Activated naive CD4-positive, alpha-beta T cell treated with anti-CD3 and anti-CD28 coated beads, Interleukin-2, amount 10 ng/mL, durations not matched to agents 7 days and 5 days (primary cell): ENCODE measurements at regions of chr4 and their contacts with region 1.

Region 1: GRCh38 chr4:168923526-168924194 is 86.4 kb downstream of the CBR4 start:
- DNase-seq: peak; percentile 68
- H3K4me3 Mint-ChIP-seq: no peak overlapping the region
- H3K27ac Mint-ChIP-seq: no peak overlapping the region
- H3K4me1 Mint-ChIP-seq: no peaks in the 10 kb centered on the region
- H3K27me3 Mint-ChIP-seq: no peaks in the 10 kb centered on the region

Region 2: GRCh38 chr4:168514249-168514852 is 409.3 kb before region 1 on chr4:
- CTCF ChIA-PET with region 1: interaction called, 23 read pairs
- DNase-seq: no peak
- H3K4me3 Mint-ChIP-seq: no peak overlapping the region
- H3K27ac Mint-ChIP-seq: no peak overlapping the region
- H3K4me1 Mint-ChIP-seq: peaks cover 40% of the 10 kb centered on the region
- H3K27me3 Mint-ChIP-seq: peaks cover 13% of the 10 kb centered on the region

Region 3: DNA sequence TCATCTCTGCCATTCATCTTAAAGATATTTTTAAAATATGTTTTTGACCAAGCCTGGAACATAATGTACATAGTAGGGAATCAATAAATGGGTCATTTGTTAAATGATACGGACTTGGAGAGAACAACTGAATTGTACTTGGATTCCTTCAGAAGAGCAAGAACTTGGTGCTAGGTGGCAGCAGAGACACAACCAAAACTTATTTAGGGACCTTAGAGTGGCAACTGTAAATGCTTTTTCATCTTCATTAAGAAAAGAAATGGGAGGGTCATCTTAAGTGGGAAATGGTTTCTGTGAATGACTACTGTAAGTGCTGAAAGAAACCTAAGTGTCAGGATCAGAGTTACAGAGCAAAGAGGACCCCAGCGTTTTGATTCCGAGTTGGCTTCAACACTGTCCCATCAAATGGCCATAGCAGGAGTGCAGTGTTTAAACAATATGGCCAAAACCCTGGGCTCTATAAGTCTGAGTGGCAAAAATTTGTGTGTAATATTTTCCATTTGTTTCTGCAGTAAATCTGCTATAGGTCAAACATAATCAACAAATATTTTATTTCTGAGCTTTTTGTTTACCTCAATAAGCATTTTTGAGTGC is 213.2 kb before region 1 on chr4:
- CTCF ChIA-PET with region 1: interaction called, 67 read pairs
- DNase-seq: no peak
- H3K4me3 Mint-ChIP-seq: no peak overlapping the region
- H3K27ac Mint-ChIP-seq: no peak overlapping the region
- H3K4me1 Mint-ChIP-seq: no peaks in the 10 kb centered on the region
- H3K27me3 Mint-ChIP-seq: no peaks in the 10 kb centered on the region

Region 4: GRCh38 chr4:169005453-169006099 is 81.9 kb after region 1 on chr4:
- CTCF ChIA-PET with region 1: interaction called, 26 read pairs
- DNase-seq: no peak
- H3K4me3 Mint-ChIP-seq: no peak overlapping the region
- H3K27ac Mint-ChIP-seq: no peak overlapping the region
- H3K4me1 Mint-ChIP-seq: peaks cover 25% of the 10 kb centered on the region
- H3K27me3 Mint-ChIP-seq: peaks cover 4% of the 10 kb centered on the region

Region 5: GRCh38 chr4:169167958-169168858 is 244.5 kb after region 1 on chr4:
- CTCF ChIA-PET with region 1: no interaction called
- DNase-seq: no peak
- H3K4me3 Mint-ChIP-seq: no peak overlapping the region
- H3K27ac Mint-ChIP-seq: no peak overlapping the region
- H3K4me1 Mint-ChIP-seq: no peaks in the 10 kb centered on the region
- H3K27me3 Mint-ChIP-seq: no peaks in the 10 kb centered on the region

Region 6: GRCh38 chr4:169489306-169489705 is 565.6 kb after region 1 on chr4:
- CTCF ChIA-PET with region 1: interaction called, 24 read pairs
- DNase-seq: no peak
- H3K4me3 Mint-ChIP-seq: no peak overlapping the region
- H3K27ac Mint-ChIP-seq: no peak overlapping the region
- H3K4me1 Mint-ChIP-seq: peaks cover 7% of the 10 kb centered on the region
- H3K27me3 Mint-ChIP-seq: no peaks in the 10 kb centered on the region